Thyroid gland (tissue), 4 donors: ENCODE measurements at regions of chr1 and their contacts with region 1.

Region 1: DNA sequence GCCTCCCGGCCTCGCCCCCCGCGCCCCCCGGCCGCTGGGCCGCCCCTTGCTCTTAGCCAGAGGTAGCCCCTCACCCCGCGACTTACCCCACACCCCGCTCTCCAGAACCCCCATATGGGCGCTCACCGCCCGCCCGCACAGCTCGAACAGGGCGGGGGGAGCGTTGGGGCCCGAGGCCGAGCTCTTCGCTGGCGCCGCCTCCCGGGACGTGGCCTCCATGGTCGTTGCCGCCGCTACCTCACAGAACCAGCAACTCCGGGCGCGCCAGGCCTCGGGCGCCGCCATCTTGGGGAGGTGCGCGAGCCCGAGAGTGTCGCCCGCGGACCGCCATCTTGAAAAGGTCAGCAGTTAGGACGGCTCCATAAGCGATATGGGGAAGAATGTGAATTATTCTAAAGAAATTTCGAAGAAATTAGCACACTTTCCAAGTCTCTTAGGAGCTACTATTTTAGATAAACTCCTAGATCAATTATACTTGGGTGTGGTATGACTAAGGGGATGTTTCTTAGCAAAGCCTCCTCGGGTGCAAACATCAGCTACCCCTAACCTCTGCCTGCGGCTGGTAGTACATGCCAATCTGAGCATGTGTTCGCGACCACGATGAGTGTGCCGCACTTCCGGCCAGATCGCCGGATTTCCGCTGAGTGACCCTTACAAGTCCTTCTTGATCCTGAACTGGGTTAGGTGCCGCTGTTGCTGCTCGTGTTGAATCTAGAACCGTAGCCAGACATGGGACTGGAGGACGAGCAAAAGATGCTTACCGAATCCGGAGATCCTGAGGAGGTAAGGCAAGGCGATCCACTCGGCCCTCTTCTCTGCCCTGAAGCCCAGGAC is at the starts of genes LRRC41 and UQCRH:
- DNase-seq: peak; percentile 95 to 96
- H3K4me3 ChIP-seq: peak within 1 kb of the TSS; percentile 30 to 100 (median 86)
- H3K27ac ChIP-seq: peak within 1 kb of the TSS; percentile 98 to 100 (median 99)
- H3K4me1 ChIP-seq: peaks cover 45 to 48% of the 10 kb centered on the region in 2 donors
- H3K27me3 ChIP-seq: no peaks in the 10 kb centered on the region
- CTCF ChIP-seq: no peak
- POLR2A ChIP-seq: peak; percentile 72 to 91
- total RNA-seq, gene LRRC41: 73.5 to 111 (median 99.4) TPM
- total RNA-seq, gene UQCRH: 122 to 367 (median 267) TPM

Region 2: GRCh38 chr1:46205793-46206192 is 97.5 kb before region 1 on chr1:
- intact Hi-C with region 1: no loop called
- DNase-seq: no peak
- H3K4me3 ChIP-seq: no peak overlapping the region
- H3K27ac ChIP-seq: peak overlapping the region; percentile 42 to 97 (median 84)
- H3K4me1 ChIP-seq: peaks cover 31 to 38% of the 10 kb centered on the region in 2 donors
- H3K27me3 ChIP-seq: no peaks in the 10 kb centered on the region
- CTCF ChIP-seq: no peak
- POLR2A ChIP-seq: no peak

Region 3: DNA sequence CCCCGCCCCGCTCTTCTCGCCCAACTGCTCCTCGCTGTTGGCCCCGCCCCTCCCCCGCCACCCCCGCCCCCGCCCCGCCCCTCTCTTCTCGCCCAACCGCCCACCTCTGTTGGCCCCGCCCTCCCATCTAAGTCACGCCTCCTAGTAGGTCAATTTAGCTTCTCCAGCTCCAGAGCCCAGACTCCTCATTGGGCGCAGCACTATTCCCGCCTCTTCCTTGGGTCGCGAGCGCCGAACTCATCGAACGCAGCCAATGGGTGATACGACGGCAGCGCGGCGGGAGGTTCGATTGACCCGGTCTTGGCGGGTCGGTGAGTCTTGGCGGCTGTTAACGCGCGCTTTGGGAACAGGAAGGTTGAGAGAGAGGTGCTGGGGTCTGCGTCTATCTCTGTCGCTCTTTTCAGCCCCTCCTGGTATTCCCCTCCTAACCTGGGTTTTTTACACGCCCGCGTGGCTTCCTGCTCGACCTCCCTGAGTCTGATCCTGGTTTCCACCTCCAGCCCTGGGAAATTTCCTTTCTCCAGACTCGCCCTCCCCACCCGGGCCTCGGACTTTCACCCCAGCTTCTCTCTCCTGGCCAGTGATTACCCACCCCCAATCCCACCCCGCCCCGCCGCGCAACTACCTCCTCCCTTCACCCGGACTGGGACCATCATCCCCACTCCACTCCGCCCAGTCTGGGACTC is 55.7 kb before region 1 on chr1 and contains the start of gene RAD54L:
- intact Hi-C with region 1: loop called (anchors 10 kb)
- DNase-seq: peak; percentile 98
- H3K4me3 ChIP-seq: peak within 1 kb of the TSS; percentile 27 to 37 (median 34)
- H3K27ac ChIP-seq: peak within 1 kb of the TSS; percentile 28 to 66 (median 35)
- H3K4me1 ChIP-seq: peaks cover 4 to 6% of the 10 kb centered on the region in 2 donors
- H3K27me3 ChIP-seq: no peaks in the 10 kb centered on the region
- CTCF ChIP-seq: no peak
- POLR2A ChIP-seq: no peak
- total RNA-seq, gene RAD54L: 0.27 to 1.7 (median 0.61) TPM

Region 4: DNA sequence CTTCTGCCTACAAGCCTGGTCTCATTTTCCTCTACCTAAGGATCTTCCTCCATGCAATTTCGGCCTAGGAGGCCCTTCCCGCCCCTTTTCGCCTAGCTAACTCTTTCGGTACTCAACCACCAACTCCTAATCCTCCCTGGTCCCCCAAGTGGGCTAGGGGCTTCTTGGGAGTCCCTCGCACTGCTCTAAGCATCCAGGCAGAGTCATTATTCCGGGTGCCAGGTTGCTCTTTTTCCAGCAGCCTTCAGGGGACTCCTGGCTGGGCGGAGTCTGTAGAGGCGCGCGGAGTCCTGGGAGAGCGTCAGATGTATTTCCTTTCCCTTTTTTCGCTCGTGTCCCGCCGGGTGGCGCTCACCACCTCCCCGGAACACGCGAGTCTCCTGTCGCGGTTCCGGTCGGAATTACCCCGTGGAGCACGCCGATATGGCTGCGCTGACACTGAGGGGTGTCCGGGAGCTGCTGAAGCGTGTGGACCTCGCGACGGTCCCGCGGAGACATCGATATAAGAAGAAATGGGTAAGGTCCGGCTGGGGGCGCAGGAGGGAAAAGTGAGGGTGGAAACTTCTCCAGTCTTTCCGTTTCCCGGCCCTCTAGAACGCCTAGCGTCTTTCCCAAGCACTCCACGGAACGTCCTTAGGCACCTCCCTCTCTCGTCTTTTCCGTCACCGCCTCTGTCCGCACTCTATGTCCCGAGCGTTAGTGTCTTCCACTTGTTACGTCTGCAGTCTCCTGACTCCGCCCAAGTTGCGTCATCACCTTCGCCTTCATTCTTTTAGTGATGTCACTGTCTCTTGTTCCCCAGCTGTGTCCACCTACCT is 37.4 kb after region 1 on chr1 and contains the start of gene NSUN4:
- intact Hi-C with region 1: loop called (anchors 5 kb)
- DNase-seq: peak; percentile 96 to 97
- H3K4me3 ChIP-seq: peak within 1 kb of the TSS; percentile 36 to 50 (median 45)
- H3K27ac ChIP-seq: peak within 1 kb of the TSS; percentile 93 to 98 (median 98)
- H3K4me1 ChIP-seq: peaks cover 0 to 6% of the 10 kb centered on the region in 2 donors
- H3K27me3 ChIP-seq: no peaks in the 10 kb centered on the region
- CTCF ChIP-seq: peak in 4 of 6 experiments; percentile 63 to 80 (median 70)
- POLR2A ChIP-seq: peak in 1 of 2 donors; percentile 79
- total RNA-seq, gene NSUN4: 23.4 to 40.0 (median 34.9) TPM

Region 5: GRCh38 chr1:46394108-46394871 is 91.0 kb after region 1 on chr1 and contains the start of gene FAAH:
- intact Hi-C with region 1: no loop called
- DNase-seq: peak; percentile 81 to 83
- H3K4me3 ChIP-seq: peak within 1 kb of the TSS; percentile 6 to 52 (median 31)
- H3K27ac ChIP-seq: peak within 1 kb of the TSS; percentile 82 to 85 (median 82)
- H3K4me1 ChIP-seq: peaks cover 22 to 25% of the 10 kb centered on the region in 2 donors
- H3K27me3 ChIP-seq: no peaks in the 10 kb centered on the region
- CTCF ChIP-seq: peak in 1 of 6 experiments; percentile 7
- POLR2A ChIP-seq: peak; percentile 44 to 72
- total RNA-seq, gene FAAH: 103 to 199 (median 152) TPM